Posterior cingulate gyrus (tissue), 11 donors: ENCODE measurements at regions of chr7 and their contacts with region 1.

Region 1: DNA sequence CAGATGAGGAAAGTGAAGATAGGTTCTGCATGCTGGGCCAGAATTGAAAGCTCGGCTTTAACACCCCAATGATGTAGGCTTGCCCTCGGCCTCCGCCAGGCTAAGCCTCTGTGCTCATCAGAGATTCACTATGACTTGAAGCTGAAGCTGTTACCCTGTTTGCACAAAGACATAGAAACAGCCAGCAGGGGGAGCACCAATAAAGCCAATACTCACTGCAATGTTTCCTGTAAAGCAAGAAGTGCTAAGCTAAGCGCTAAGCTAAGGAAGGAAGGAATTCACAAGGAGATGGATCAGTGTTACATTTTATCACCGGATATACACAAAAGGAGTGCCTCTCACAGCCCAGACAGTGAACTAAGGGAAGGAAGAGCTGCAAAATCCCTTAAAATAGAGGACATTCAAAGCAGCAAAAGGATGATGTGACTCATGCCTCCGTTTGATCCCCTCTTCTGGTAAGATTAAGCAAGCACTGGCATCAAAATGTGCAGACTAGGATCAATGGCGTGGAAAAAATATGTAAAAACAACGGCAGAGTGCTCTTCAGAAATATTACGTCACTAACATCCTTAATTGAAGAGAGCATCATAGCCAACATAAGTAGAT is 153.8 kb downstream of the COBL start:
- DNase-seq: peak in 7 of 10 donors; percentile 66 to 95 (median 88)

Region 2: GRCh38 chr7:50142425-50143017 is 1020.3 kb before region 1 on chr7:
- intact Hi-C with region 1: loop called (anchors 2 kb)
- DNase-seq: no peak

Region 3: GRCh38 chr7:50641442-50642405 is 521.1 kb before region 1 on chr7:
- intact Hi-C with region 1: loop called (anchors 5 kb)
- DNase-seq: peak; percentile 72 to 98 (median 84)

Region 4: DNA sequence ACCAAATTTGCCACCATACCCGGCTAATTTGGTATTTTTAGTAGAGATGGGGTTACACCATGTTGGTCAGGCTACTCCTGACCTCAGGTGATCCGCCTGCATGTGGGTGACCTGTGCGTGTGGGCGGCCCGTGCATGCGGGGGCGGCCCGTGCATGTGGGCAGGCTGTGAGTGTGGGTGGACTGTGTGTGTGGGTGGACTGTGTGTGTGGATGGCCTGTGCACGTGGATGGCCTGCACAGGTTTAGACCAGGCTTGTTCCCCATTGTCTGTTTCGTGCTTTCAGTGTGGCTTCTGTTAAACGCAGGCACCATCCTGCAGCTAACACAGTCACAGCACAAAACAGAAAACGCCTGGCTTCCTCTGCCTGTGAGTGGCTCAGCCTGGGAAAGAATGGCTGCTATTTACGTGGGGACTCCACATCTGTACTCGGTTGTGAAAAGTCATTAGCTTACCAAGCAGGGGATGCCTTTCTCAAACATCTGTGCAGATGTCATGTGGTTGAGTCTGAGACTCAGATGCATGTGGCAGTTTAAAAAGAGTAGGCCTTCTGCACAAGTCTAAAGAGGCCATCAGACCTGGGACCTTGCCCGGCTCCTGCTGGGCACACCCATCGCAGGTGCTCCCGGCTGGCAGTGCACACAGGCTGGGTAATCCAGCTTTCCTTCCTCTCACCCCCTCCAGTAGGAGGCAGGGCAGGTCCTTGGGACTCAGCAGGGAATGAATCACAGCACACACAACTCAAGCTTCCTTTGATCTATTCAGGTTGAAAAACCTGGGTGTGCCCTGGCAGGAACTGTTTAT is 62.2 kb after region 1 on chr7:
- intact Hi-C with region 1: loop called (anchors 5 kb)
- DNase-seq: peak in 1 of 10 donors; percentile 38

Region 5: DNA sequence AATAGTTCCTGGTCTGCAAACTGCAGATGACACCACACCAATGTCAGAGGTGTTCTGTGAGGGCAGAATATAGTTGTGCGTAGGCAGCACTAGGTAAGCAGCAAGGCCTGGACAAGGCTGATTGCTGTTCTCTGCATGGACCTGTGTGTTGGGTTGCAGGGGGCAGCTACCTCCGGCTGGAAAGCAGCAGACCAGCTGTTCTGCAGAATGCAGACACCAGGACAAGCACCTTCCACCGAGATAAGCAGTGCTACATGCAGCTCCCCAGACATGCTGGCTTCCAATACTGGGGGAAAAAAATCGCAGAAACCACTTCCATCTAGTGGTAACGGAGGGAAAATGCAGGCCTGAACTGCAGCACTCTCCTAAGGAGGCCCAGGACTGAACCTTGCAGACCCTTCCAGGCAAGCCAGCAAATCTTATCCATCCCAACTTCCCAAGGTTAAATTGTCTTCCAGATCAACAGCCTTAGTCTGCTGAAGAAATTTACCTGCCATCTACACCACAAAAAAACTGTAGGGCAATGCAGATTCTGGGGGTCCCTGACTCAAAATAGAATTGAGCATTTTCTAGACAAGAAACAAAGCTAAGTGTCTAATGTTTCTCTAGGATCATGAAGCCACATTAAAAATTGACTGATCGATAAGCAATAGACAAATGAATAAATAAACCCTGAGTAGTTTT is 204.2 kb after region 1 on chr7:
- intact Hi-C with region 1: loop called (anchors 1 kb)
- DNase-seq: peak in 6 of 10 donors; percentile 19 to 86 (median 54)